Psoas muscle (tissue), 8 donors: ENCODE measurements at regions of chr2 and their contacts with region 1.

Region 1: GRCh38 chr2:27890146-27890923 is at the starts of genes BABAM2 and RBKS:
- DNase-seq: peak; percentile 89 to 94
- ATAC-seq: peak; percentile 96 to 98 (median 97)
- H3K4me3 ChIP-seq: peak within 1 kb of the TSS; percentile 70
- H3K27ac ChIP-seq: peak within 1 kb of the TSS; percentile 88
- H3K4me1 ChIP-seq: peaks cover 26% of the 10 kb centered on the region
- H3K27me3 ChIP-seq: no peaks in the 10 kb centered on the region
- CTCF ChIP-seq: no peak
- total RNA-seq, gene BABAM2: 48.2 to 74.5 (median 57.2) TPM
- total RNA-seq, gene RBKS: 3.5 to 4.4 (median 3.8) TPM

Region 2: GRCh38 chr2:27771548-27772335 is 118.6 kb before region 1 on chr2 and contains the start of gene MRPL33:
- intact Hi-C with region 1: loop called in 1 of 2 experiments (anchors 10 kb)
- DNase-seq: peak; percentile 97 to 98
- ATAC-seq: peak; percentile 96 to 99 (median 97)
- H3K4me3 ChIP-seq: peak within 1 kb of the TSS; percentile 93
- H3K27ac ChIP-seq: peak within 1 kb of the TSS; percentile 97
- H3K4me1 ChIP-seq: peaks cover 44% of the 10 kb centered on the region
- H3K27me3 ChIP-seq: no peaks in the 10 kb centered on the region
- CTCF ChIP-seq: no peak
- total RNA-seq, gene MRPL33: 200 to 269 (median 257) TPM

Region 3: DNA sequence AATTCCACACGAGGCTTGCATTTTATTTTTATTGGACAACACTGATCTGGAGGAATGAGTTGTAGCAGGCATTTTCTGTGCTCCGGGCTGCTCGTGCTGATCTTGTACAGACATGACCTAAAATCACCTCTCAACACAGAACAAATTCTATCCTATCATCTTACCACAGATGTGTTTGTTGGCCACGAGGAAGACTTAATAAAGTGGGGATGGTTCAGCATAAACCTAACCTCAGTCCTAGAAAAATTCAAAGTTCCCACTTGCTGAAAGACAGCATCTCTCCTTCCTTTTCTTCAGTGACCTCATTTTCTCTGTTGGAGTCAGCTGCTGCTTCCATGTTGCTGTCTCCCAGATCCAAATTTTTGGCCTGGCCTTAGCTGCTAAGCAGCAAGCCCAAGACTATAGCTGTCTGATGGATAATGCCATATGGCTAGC is 45.5 kb before region 1 on chr2:
- intact Hi-C with region 1: loop called in 1 of 2 experiments (anchors 5 kb)
- DNase-seq: no peak
- ATAC-seq: peak; percentile 56 to 83 (median 64)
- H3K4me3 ChIP-seq: no peak overlapping the region
- H3K27ac ChIP-seq: peak overlapping the region; percentile 60
- H3K4me1 ChIP-seq: peaks cover 26% of the 10 kb centered on the region
- H3K27me3 ChIP-seq: no peaks in the 10 kb centered on the region
- CTCF ChIP-seq: no peak

Region 4: GRCh38 chr2:27954771-27955383 is 64.5 kb after region 1 on chr2:
- intact Hi-C with region 1: loop called in 1 of 2 experiments (anchors 5 kb)
- DNase-seq: peak; percentile 59 to 63
- ATAC-seq: peak; percentile 91 to 95 (median 94)
- H3K4me3 ChIP-seq: peak overlapping the region; percentile 31
- H3K27ac ChIP-seq: peak overlapping the region; percentile 69
- H3K4me1 ChIP-seq: peaks cover 50% of the 10 kb centered on the region
- H3K27me3 ChIP-seq: no peaks in the 10 kb centered on the region
- CTCF ChIP-seq: peak; percentile 35

Region 5: GRCh38 chr2:28398101-28398834 is 507.9 kb after region 1 on chr2:
- intact Hi-C with region 1: loop called (anchors 2 to 10 kb)
- DNase-seq: peak in 1 of 2 donors; percentile 69
- ATAC-seq: peak; percentile 39 to 57 (median 50)
- H3K4me3 ChIP-seq: peak overlapping the region; percentile 100
- H3K27ac ChIP-seq: peak overlapping the region; percentile 100
- H3K4me1 ChIP-seq: peaks cover 58% of the 10 kb centered on the region
- H3K27me3 ChIP-seq: no peaks in the 10 kb centered on the region
- CTCF ChIP-seq: no peak